T-cell (primary cell): ENCODE measurements at regions of chr1 and their contacts with region 1.

Region 1: GRCh38 chr1:235960809-235961208 is 94.1 kb upstream of the LYST start:
- DNase-seq: no peak
- ATAC-seq: no peak
- H3K4me3 ChIP-seq: no peak overlapping the region
- H3K4me3 Mint-ChIP-seq: no peak overlapping the region
- H3K27ac ChIP-seq: no peak overlapping the region
- H3K27ac Mint-ChIP-seq: no peak overlapping the region
- H3K4me1 ChIP-seq: no peaks in the 10 kb centered on the region
- H3K4me1 Mint-ChIP-seq: peaks cover 8 to 21% (median 18%) of the 10 kb centered on the region in 3 donors
- H3K27me3 ChIP-seq: no peaks in the 10 kb centered on the region
- H3K27me3 Mint-ChIP-seq: peaks cover 0 to 1% of the 10 kb centered on the region in 2 donors

Region 2: GRCh38 chr1:234515821-234516241 is 1445.0 kb before region 1 on chr1:
- CTCF ChIA-PET with region 1: interaction called in 1 of 2 experiments, 3 read pairs
- POLR2A ChIA-PET with region 1: interaction called in 1 of 2 experiments, 11 read pairs
- DNase-seq: no peak
- ATAC-seq: no peak
- H3K4me3 ChIP-seq: no peak overlapping the region
- H3K4me3 Mint-ChIP-seq: no peak overlapping the region
- H3K27ac ChIP-seq: no peak overlapping the region
- H3K27ac Mint-ChIP-seq: no peak overlapping the region
- H3K4me1 ChIP-seq: no peaks in the 10 kb centered on the region
- H3K4me1 Mint-ChIP-seq: no peaks in the 10 kb centered on the region
- H3K27me3 ChIP-seq: peaks cover 0 to 3% of the 10 kb centered on the region in 2 experiments
- H3K27me3 Mint-ChIP-seq: peaks cover 0 to 4% of the 10 kb centered on the region in 2 donors

Region 3: DNA sequence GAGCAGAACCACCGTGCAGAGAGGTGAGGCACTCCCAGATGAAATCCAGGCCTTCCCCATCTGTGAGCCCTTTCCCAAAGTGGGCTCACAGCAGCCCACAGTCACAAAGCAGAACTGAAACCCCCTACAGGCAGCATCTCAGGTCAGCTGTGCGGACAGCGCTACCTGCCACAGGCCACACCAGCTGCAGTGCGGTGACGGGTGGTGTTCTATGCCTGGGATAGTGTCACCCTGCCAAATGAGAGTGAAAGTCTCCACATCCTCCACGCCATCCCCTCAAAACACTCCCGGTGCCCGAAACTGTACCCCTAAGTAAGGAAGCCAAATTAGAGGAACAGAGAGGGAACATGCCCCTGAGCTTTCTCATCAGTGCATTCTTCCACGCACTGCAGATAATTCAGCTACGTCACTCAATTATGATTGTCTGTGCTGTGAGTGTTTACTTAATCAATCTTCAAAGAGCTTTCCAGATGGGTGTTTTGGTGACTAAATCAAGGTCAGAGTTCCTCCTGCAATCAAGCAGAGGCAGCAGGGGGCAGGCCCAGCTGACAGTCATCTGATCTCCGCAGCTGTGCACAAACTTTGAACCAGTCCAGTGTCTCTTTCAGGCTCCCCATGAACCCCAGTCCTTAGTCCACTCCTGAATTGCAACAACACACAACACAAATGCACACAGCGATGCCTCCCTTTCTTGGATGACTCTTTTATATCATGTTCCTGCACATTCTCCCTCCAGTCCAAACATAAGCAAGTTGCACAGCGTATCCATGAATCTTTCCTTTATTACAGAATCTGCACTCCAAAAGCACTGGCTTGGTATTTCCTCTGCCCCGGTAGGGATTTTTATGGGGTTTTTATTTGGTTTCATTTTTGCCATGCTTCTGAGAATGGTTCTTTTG is 982.2 kb before region 1 on chr1:
- CTCF ChIA-PET with region 1: no interaction called
- POLR2A ChIA-PET with region 1: interaction called in 1 of 2 experiments, 12 read pairs
- DNase-seq: peak in 33 of 35 experiments; percentile 14 to 77 (median 45)
- ATAC-seq: peak; percentile 51 to 81 (median 58)
- H3K4me3 ChIP-seq: no peak overlapping the region
- H3K4me3 Mint-ChIP-seq: peak overlapping the region; percentile 21 to 75 (median 52)
- H3K27ac ChIP-seq: peak overlapping the region; percentile 94
- H3K27ac Mint-ChIP-seq: peak overlapping the region; percentile 90 to 97
- H3K4me1 ChIP-seq: peaks cover 25 to 42% of the 10 kb centered on the region in 2 experiments
- H3K4me1 Mint-ChIP-seq: peaks cover 41 to 79% (median 57%) of the 10 kb centered on the region in 3 donors
- H3K27me3 ChIP-seq: no peaks in the 10 kb centered on the region
- H3K27me3 Mint-ChIP-seq: no peaks in the 10 kb centered on the region

Region 4: DNA sequence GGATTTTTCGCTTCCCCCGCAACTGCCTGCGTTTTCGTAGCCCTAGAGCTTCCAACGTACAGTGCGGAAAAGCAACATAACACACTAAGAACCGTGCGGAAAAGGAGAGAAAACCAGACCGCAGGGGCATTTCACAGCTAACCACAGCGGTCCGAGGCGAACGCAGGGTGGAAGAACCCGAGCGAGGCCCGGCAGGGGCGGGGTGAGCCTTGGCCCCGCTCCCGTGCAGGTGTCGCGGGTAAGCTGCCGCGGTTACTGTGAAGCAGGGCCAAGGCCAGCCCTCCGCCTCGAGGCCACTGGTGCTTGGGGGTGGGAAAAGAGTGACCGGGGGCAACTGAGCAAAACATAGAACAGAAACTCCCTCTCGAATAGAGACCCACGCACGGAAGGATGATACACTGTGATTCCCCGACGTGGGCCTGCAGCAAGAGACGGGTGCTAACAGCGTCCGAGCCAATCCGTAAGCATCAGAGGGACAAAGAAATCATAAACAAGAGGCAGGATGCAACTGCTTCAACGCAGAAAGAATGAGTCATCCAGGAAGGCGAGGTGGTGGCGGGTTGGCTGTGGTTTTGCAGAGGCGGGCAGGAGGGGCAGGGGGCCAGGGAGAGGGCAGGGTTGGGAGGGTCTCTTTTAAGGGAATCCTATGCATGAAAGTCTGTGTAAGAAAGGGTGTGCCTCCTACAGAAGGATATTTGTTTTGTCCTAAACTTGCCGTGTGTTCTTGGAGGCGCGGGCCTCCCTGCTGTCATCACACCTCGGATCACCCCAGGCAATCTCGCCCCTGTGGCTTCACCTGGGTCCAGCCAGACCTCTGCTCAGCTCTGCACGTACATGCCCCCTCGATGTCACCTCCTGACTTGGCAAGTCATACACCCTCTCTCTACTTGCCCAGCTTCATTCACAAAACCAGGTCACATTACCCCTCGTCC is 318.5 kb before region 1 on chr1:
- CTCF ChIA-PET with region 1: no interaction called
- POLR2A ChIA-PET with region 1: no interaction called
- DNase-seq: peak; percentile 41 to 82 (median 60)
- ATAC-seq: peak; percentile 80 to 86 (median 84)
- H3K4me3 ChIP-seq: peak overlapping the region; percentile 55 to 78
- H3K4me3 Mint-ChIP-seq: peak overlapping the region; percentile 67 to 78 (median 76)
- H3K27ac ChIP-seq: peak overlapping the region; percentile 92
- H3K27ac Mint-ChIP-seq: peak overlapping the region; percentile 91
- H3K4me1 ChIP-seq: peaks cover 2 to 30% of the 10 kb centered on the region in 2 experiments
- H3K4me1 Mint-ChIP-seq: peaks cover 23 to 38% (median 25%) of the 10 kb centered on the region in 3 donors
- H3K27me3 ChIP-seq: peaks cover 0 to 11% of the 10 kb centered on the region in 2 experiments
- H3K27me3 Mint-ChIP-seq: peaks cover 13 to 17% of the 10 kb centered on the region in 2 donors

Region 5: GRCh38 chr1:236009857-236010256 is 49.0 kb after region 1 on chr1:
- CTCF ChIA-PET with region 1: no interaction called
- POLR2A ChIA-PET with region 1: no interaction called
- DNase-seq: no peak
- ATAC-seq: no peak
- H3K4me3 ChIP-seq: no peak overlapping the region
- H3K4me3 Mint-ChIP-seq: no peak overlapping the region
- H3K27ac ChIP-seq: no peak overlapping the region
- H3K27ac Mint-ChIP-seq: no peak overlapping the region
- H3K4me1 ChIP-seq: no peaks in the 10 kb centered on the region
- H3K4me1 Mint-ChIP-seq: no peaks in the 10 kb centered on the region
- H3K27me3 ChIP-seq: no peaks in the 10 kb centered on the region
- H3K27me3 Mint-ChIP-seq: no peaks in the 10 kb centered on the region